Activated B cell treated with CpG ODN at 0.5 μM for 24 hours (primary cell): ENCODE measurements at regions of chr14 and their contacts with region 1.

Region 1: GRCh38 chr14:100213956-100214774 is 24.8 kb upstream of the YY1 start:
- DNase-seq: peak; percentile 91
- ATAC-seq: peak; percentile 96
- H3K4me3 Mint-ChIP-seq: peak overlapping the region; percentile 85
- H3K27ac Mint-ChIP-seq: peak overlapping the region; percentile 80
- H3K4me1 Mint-ChIP-seq: peaks cover 17% of the 10 kb centered on the region
- H3K27me3 Mint-ChIP-seq: no peaks in the 10 kb centered on the region
- CTCF ChIP-seq: no peak

Region 2: GRCh38 chr14:99579903-99580570 is 634.1 kb before region 1 on chr14:
- CTCF ChIA-PET with region 1: no interaction called
- POLR2A ChIA-PET with region 1: no interaction called
- intact Hi-C with region 1: no loop called
- DNase-seq: no peak
- ATAC-seq: no peak
- H3K4me3 Mint-ChIP-seq: no peak overlapping the region
- H3K27ac Mint-ChIP-seq: no peak overlapping the region
- H3K4me1 Mint-ChIP-seq: peaks cover 2% of the 10 kb centered on the region
- H3K27me3 Mint-ChIP-seq: no peaks in the 10 kb centered on the region
- CTCF ChIP-seq: no peak

Region 3: GRCh38 chr14:100155042-100155846 is 58.9 kb before region 1 on chr14:
- CTCF ChIA-PET with region 1: no interaction called
- POLR2A ChIA-PET with region 1: interaction called, 3 read pairs
- intact Hi-C with region 1: loop called (anchors 2 kb)
- DNase-seq: no peak
- ATAC-seq: no peak
- H3K4me3 Mint-ChIP-seq: no peak overlapping the region
- H3K27ac Mint-ChIP-seq: no peak overlapping the region
- H3K4me1 Mint-ChIP-seq: peaks cover 31% of the 10 kb centered on the region
- H3K27me3 Mint-ChIP-seq: no peaks in the 10 kb centered on the region
- CTCF ChIP-seq: no peak

Region 4: DNA sequence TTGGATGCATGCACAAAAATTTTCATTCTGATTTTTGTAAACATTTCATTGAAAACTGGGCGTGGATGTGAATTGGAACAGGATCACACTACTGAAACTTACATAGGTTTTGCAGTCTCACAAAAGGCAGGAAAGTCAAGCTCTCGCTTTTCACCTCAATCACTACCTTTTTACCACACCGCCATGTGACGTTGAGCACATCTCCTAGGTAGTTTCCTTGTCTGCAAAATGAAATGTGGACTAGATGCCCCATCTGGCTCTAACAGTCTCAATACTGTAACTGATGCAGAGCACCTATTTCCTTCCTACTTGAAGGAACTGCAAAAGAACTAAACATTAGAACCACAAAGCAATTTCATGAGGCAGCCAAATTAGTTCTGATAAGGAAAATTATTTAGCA is 20.3 kb after region 1 on chr14:
- CTCF ChIA-PET with region 1: no interaction called
- POLR2A ChIA-PET with region 1: interaction called, 14 read pairs
- intact Hi-C with region 1: loop called (anchors 1 kb)
- DNase-seq: no peak
- ATAC-seq: no peak
- H3K4me3 Mint-ChIP-seq: no peak overlapping the region
- H3K27ac Mint-ChIP-seq: no peak overlapping the region
- H3K4me1 Mint-ChIP-seq: peaks cover 33% of the 10 kb centered on the region
- H3K27me3 Mint-ChIP-seq: no peaks in the 10 kb centered on the region
- CTCF ChIP-seq: no peak